PC-3 (cell line): ENCODE measurements at regions of chr2 and their contacts with region 1.

Region 1: GRCh38 chr2:166972418-166972817 is 84.1 kb downstream of the XIRP2 start:
- DNase-seq: peak; percentile 65
- ATAC-seq: peak; percentile 94
- H3K4me3 ChIP-seq: peak overlapping the region; percentile 11; the same call in 1 of the 2 replicates
- H3K27ac ChIP-seq: peak overlapping the region; percentile 74
- H3K4me1 ChIP-seq: peaks cover 18% of the 10 kb centered on the region
- H3K27me3 ChIP-seq: no peaks in the 10 kb centered on the region
- CTCF ChIP-seq: no peak

Region 2: GRCh38 chr2:166665991-166666940 is 306.2 kb before region 1 on chr2:
- CTCF ChIA-PET with region 1: no interaction called
- POLR2A ChIA-PET with region 1: no interaction called
- intact Hi-C with region 1: no loop called
- DNase-seq: peak; percentile 44
- ATAC-seq: peak; percentile 10; the same call in 1 of the 2 replicates
- H3K4me3 ChIP-seq: no peak overlapping the region
- H3K27ac ChIP-seq: no peak overlapping the region
- H3K4me1 ChIP-seq: peaks cover 5% of the 10 kb centered on the region
- H3K27me3 ChIP-seq: no peaks in the 10 kb centered on the region
- CTCF ChIP-seq: no peak

Region 3: DNA sequence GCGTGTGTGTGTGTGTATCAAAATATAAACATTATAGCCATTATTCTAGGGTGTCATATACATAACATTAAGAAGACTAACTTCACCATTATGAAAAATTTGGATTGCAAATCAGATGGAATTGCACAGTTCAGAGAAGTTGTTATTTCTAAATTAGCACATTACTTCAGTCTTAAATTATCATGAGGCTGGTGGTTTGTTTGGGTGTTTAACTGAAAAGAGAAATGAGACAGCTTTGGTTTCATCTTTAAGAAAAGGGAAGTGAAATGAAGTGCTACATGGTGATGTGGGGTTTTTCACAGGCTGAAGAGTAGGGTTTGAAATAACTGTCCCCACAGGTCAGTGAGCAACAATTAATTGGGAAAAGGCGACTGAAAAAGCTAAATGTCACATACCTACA is 245.3 kb before region 1 on chr2:
- CTCF ChIA-PET with region 1: no interaction called
- POLR2A ChIA-PET with region 1: no interaction called
- intact Hi-C with region 1: loop called (anchors 10 kb)
- DNase-seq: no peak
- ATAC-seq: no peak
- H3K4me3 ChIP-seq: no peak overlapping the region
- H3K27ac ChIP-seq: no peak overlapping the region
- H3K4me1 ChIP-seq: no peaks in the 10 kb centered on the region
- H3K27me3 ChIP-seq: 0 out of 2 replicates have a peak, but pooled peaks cover 6% of the 10 kb centered on the region
- CTCF ChIP-seq: no peak

Region 4: GRCh38 chr2:166882851-166883250 is 89.6 kb before region 1 on chr2:
- CTCF ChIA-PET with region 1: no interaction called
- POLR2A ChIA-PET with region 1: no interaction called
- intact Hi-C with region 1: no loop called
- DNase-seq: no peak
- ATAC-seq: no peak
- H3K4me3 ChIP-seq: no peak overlapping the region
- H3K27ac ChIP-seq: no peak overlapping the region
- H3K4me1 ChIP-seq: no peaks in the 10 kb centered on the region
- H3K27me3 ChIP-seq: no peaks in the 10 kb centered on the region
- CTCF ChIP-seq: no peak

Region 5: GRCh38 chr2:166984797-166985196 is 12.4 kb after region 1 on chr2:
- CTCF ChIA-PET with region 1: no interaction called
- POLR2A ChIA-PET with region 1: no interaction called
- intact Hi-C with region 1: loop called (anchors 1 kb)
- DNase-seq: peak; percentile 89
- ATAC-seq: peak; percentile 99
- H3K4me3 ChIP-seq: no peak overlapping the region
- H3K27ac ChIP-seq: peak overlapping the region; percentile 77
- H3K4me1 ChIP-seq: peaks cover 18% of the 10 kb centered on the region
- H3K27me3 ChIP-seq: no peaks in the 10 kb centered on the region
- CTCF ChIP-seq: no peak

Region 6: GRCh38 chr2:167028505-167028904 is 56.1 kb after region 1 on chr2:
- CTCF ChIA-PET with region 1: no interaction called
- POLR2A ChIA-PET with region 1: no interaction called
- intact Hi-C with region 1: no loop called
- DNase-seq: no peak
- ATAC-seq: no peak
- H3K4me3 ChIP-seq: no peak overlapping the region
- H3K27ac ChIP-seq: no peak overlapping the region
- H3K4me1 ChIP-seq: no peaks in the 10 kb centered on the region
- H3K27me3 ChIP-seq: no peaks in the 10 kb centered on the region
- CTCF ChIP-seq: no peak

Region 7: DNA sequence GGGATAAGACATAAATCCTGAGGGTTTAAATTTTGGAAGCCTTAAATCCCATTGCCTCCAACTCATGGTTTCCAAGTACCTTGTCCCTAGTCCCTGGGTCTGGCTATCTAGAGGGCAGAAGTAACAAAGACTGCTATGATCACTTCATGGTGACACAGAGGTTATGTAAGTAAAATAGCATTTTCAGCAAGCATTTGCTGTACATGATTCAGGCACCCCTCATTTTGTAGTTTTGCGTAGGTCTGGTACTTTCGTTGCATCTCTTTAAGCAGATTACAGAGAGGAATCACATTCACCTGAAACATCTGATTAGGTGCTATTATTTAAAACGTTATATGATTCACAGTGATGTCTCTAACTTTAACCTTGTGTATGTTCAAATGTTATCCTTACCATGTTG is 396.0 kb after region 1 on chr2:
- CTCF ChIA-PET with region 1: no interaction called
- POLR2A ChIA-PET with region 1: no interaction called
- intact Hi-C with region 1: no loop called
- DNase-seq: no peak
- ATAC-seq: no peak
- H3K4me3 ChIP-seq: no peak overlapping the region
- H3K27ac ChIP-seq: no peak overlapping the region
- H3K4me1 ChIP-seq: no peaks in the 10 kb centered on the region
- H3K27me3 ChIP-seq: no peaks in the 10 kb centered on the region
- CTCF ChIP-seq: no peak